Calu3 (cell line): ENCODE measurements at regions of chr5 and their contacts with region 1.

Region 1: GRCh38 chr5:101390151-101390908 is 487.2 kb upstream of the ST8SIA4 start:
- DNase-seq: peak; percentile 40
- H3K4me3 Mint-ChIP-seq: no peak overlapping the region
- H3K27ac Mint-ChIP-seq: no peak overlapping the region
- H3K4me1 Mint-ChIP-seq: no peaks in the 10 kb centered on the region
- H3K27me3 Mint-ChIP-seq: no peaks in the 10 kb centered on the region
- CTCF ChIP-seq: peak; percentile 55

Region 2: DNA sequence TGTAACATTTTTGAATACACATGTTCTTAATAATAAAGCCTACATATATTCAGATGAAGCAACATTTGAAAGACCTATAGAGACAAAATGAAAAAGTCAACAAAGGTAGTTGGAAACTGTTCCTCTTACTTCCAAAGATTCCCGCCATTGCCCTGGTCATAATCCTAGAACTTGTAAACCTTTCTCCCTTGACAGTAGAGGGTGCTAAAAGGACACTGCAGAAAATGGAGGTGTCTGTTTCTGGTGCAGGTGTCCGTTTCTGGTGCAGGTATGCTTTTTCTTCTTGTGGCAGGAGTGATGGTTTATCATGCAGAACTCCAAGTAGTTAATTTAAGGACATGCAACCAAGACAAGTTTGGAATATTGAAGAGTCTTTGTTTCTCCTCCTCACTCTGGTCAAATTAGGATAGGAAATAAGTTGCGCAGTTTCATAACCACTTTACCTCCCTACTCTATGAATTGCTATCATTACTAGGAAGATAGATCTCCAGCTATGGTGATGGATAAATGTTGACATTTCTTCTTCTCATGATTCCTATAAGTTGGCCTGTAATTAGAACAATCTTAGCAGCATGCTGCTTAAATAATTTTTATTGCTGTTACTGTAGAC is 911.1 kb before region 1 on chr5:
- CTCF ChIA-PET with region 1: no interaction called
- intact Hi-C with region 1: loop called (anchors 1 kb)
- DNase-seq: peak; percentile 46
- H3K4me3 Mint-ChIP-seq: no peak overlapping the region
- H3K27ac Mint-ChIP-seq: no peak overlapping the region
- H3K4me1 Mint-ChIP-seq: no peaks in the 10 kb centered on the region
- H3K27me3 Mint-ChIP-seq: no peaks in the 10 kb centered on the region
- CTCF ChIP-seq: peak; percentile 65

Region 3: DNA sequence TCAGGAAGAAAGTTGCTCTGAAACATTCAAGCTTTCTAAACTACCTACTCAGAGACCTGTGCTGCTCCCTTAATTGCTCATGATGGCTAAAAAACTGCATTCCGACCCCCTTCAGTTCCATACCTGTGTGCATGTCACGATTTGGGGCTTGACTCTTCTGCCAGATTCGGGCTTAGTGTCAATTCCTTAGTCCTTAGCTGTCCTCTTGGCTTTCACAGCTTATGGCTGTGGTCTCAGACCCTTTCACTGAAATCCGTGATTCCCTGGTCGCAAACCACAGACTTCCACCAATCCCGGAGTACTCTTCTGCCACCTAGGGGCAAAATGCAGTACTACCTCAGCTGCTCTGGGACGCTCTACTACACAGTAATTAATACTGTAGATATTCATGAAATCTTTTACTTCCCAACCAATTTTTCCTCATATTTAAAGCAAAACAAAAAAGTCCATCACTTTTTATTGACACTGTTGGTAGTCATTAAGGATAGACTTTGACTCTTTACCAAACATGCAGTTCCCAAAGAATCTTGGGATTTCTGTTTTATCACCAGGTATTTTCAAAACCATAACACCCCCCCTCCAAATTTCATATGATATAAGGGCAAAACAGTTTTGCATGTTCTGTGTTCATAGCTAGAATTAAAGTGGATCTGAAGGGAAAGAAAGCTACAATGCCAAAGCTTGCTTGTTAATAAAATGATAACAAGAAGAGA is 288.3 kb after region 1 on chr5:
- CTCF ChIA-PET with region 1: interaction called, 3 read pairs
- intact Hi-C with region 1: loop called (anchors 10 kb)
- DNase-seq: peak; percentile 87
- H3K4me3 Mint-ChIP-seq: peak overlapping the region; percentile 55
- H3K27ac Mint-ChIP-seq: no peak overlapping the region
- H3K4me1 Mint-ChIP-seq: peaks cover 19% of the 10 kb centered on the region
- H3K27me3 Mint-ChIP-seq: no peaks in the 10 kb centered on the region
- CTCF ChIP-seq: peak; percentile 90

Region 4: GRCh38 chr5:101977729-101978345 is 587.5 kb after region 1 on chr5:
- CTCF ChIA-PET with region 1: no interaction called
- intact Hi-C with region 1: loop called (anchors 10 kb)
- DNase-seq: peak; percentile 20
- H3K4me3 Mint-ChIP-seq: no peak overlapping the region
- H3K27ac Mint-ChIP-seq: no peak overlapping the region
- H3K4me1 Mint-ChIP-seq: peaks cover 7% of the 10 kb centered on the region
- H3K27me3 Mint-ChIP-seq: no peaks in the 10 kb centered on the region
- CTCF ChIP-seq: peak; percentile 64

Region 5: GRCh38 chr5:102153003-102153759 is 762.9 kb after region 1 on chr5:
- CTCF ChIA-PET with region 1: no interaction called
- intact Hi-C with region 1: loop called (anchors 10 kb)
- DNase-seq: peak; percentile 41
- H3K4me3 Mint-ChIP-seq: no peak overlapping the region
- H3K27ac Mint-ChIP-seq: no peak overlapping the region
- H3K4me1 Mint-ChIP-seq: peaks cover 14% of the 10 kb centered on the region
- H3K27me3 Mint-ChIP-seq: no peaks in the 10 kb centered on the region
- CTCF ChIP-seq: peak; percentile 58